Activated CD4-positive, alpha-beta memory T cell treated with anti-CD3 and anti-CD28 coated beads for 36 hours (primary cell): ENCODE measurements at regions of chr20 and their contacts with region 1.

Region 1: DNA sequence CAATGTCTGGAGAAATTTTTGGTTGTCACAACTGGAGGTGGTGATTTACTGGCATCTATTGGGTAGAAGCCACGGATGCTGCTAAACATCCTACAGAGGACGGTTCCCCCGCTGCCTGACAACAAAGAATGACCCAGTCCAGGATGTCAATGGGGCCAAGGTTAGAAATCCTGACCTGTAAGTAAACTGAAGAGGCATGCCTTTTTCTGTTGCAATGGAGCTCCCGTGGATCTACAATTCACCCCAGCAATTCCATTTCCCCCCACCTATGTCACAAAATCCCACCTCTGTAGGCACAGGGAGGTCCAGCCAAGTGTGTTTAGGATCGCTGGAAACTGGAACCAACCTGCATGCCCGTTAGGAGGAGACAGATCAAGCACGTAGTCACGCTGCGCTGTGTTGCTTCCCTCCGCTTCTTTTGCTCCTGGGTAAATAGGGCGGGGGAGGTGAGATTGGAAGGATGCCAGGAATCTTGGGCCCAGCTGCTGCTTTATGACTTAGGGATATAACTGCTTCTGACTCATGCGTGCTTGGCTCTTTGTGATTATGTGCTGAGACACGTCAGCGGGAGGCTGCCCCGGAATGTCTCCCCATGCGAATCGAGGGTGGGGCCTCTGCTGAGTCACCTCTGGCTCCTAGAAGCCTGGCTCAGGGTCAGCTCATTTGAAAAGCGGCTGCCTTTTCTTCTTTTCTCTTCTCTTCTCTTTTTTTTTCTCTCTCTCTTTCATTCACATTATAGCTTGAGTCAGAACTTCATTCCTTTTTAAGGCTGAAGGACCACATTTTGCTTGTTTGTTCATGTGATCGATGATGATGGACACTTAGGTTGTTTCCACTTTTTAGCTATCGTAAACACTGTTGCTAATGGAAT is 12.4 kb upstream of the PEDS1 start:
- DNase-seq: peak; percentile 95
- H3K4me3 Mint-ChIP-seq: peak overlapping the region; percentile 61
- H3K27ac Mint-ChIP-seq: peak overlapping the region; percentile 84
- H3K4me1 Mint-ChIP-seq: peaks cover 11% of the 10 kb centered on the region
- H3K27me3 Mint-ChIP-seq: peaks cover 2% of the 10 kb centered on the region

Region 2: DNA sequence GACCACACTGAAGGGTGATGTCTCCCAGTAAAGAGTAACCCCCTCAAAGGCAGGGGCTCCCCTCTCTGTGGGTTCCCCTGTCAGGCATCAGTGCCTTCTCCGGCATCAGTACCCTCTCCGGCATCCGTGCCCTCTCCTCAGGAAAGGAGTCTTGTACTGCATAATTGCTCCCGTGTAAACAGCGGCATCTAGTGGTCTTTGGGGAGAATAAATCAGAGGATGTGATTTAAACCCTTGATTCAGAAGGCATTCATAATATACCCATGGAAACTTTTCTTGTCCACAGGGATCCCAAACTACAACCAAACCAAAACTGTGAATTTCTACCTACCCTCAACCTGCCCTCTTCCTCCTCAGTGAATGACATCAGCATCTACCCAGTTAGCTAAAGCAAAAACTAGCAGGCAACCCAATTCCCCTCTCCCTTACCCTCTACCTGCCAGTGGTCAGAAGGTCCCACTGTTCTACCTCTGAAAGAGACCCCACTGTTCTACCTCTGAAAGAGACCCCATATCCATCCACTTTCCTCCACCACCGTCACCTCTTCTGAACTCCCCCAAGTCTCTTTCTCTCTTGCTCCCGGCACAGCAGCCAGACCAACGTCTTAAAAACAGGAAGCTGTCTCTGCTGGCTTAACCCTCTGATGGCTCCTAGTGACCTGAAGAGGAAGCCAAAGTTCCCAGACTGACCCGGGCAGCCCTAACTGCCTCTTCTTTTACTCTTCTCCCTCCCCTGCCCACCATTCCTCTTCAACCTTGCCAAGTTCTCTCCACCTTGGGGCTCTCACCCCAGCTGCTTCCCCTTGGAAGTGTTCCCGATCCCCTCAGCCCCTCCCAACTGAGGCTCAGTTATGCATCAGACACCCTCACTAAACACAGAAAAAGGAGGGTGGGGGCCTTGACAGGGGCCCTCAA is 80.2 kb before region 1 on chr20:
- CTCF ChIA-PET with region 1: interaction called, 26 read pairs
- POLR2A ChIA-PET with region 1: no interaction called
- intact Hi-C with region 1: no loop called
- DNase-seq: peak; percentile 36
- H3K4me3 Mint-ChIP-seq: no peak overlapping the region
- H3K27ac Mint-ChIP-seq: peak overlapping the region; percentile 39
- H3K4me1 Mint-ChIP-seq: peaks cover 31% of the 10 kb centered on the region
- H3K27me3 Mint-ChIP-seq: no peaks in the 10 kb centered on the region

Region 3: GRCh38 chr20:50120897-50121693 is 44.8 kb before region 1 on chr20:
- CTCF ChIA-PET with region 1: interaction called, 216 read pairs
- POLR2A ChIA-PET with region 1: interaction called, 6 read pairs
- intact Hi-C with region 1: loop called (anchors 1 kb)
- DNase-seq: peak; percentile 76
- H3K4me3 Mint-ChIP-seq: no peak overlapping the region
- H3K27ac Mint-ChIP-seq: no peak overlapping the region
- H3K4me1 Mint-ChIP-seq: peaks cover 8% of the 10 kb centered on the region
- H3K27me3 Mint-ChIP-seq: no peaks in the 10 kb centered on the region

Region 4: DNA sequence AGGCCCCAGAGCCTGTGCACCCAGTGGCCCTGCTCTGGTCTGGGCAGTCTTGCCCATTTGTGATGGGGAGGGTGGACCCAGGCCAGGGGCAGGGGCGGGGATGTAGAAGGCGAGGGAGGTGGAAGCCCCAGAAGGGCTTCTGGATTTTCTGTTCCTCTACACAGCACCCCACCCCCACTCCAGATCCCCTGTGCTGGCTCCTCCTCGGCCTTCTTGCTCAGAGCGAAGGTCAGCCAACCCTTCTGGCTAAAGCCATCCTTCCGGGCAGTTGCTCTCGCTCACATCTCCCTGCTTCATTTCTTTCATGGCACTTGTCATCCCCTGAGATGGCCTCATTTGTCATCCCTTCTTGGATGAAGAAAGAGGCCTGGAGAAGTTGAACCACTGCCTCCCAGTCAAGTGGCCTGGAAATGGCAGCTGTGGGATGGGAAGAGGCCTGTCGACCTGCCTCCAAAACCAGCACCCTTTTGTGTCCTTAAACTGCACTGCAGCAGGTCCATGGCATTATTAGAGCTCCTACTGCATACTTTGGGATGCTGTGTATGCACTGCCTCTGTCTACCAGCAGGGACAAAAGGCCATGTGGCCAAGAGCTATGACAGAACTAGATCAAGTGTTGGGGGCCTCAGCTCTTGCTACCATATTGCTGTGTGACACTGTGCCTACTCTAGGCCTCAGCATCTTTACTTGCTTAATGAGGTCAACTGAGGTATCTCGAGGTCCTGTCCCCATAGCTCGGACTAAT is 32.3 kb before region 1 on chr20:
- CTCF ChIA-PET with region 1: interaction called, 10 read pairs
- POLR2A ChIA-PET with region 1: no interaction called
- intact Hi-C with region 1: no loop called
- DNase-seq: no peak
- H3K4me3 Mint-ChIP-seq: no peak overlapping the region
- H3K27ac Mint-ChIP-seq: no peak overlapping the region
- H3K4me1 Mint-ChIP-seq: peaks cover 13% of the 10 kb centered on the region
- H3K27me3 Mint-ChIP-seq: no peaks in the 10 kb centered on the region

Region 5: GRCh38 chr20:50146732-50147662 is 18.9 kb before region 1 on chr20:
- CTCF ChIA-PET with region 1: interaction called, 44 read pairs
- POLR2A ChIA-PET with region 1: interaction called, 3 read pairs
- intact Hi-C with region 1: loop called (anchors 1 kb)
- DNase-seq: peak; percentile 89
- H3K4me3 Mint-ChIP-seq: peak overlapping the region; percentile 73
- H3K27ac Mint-ChIP-seq: peak overlapping the region; percentile 99
- H3K4me1 Mint-ChIP-seq: peaks cover 67% of the 10 kb centered on the region
- H3K27me3 Mint-ChIP-seq: no peaks in the 10 kb centered on the region

Region 6: GRCh38 chr20:50153485-50154377 is 12.2 kb before region 1 on chr20 and contains the start of gene PEDS1:
- CTCF ChIA-PET with region 1: interaction called, 44 read pairs
- POLR2A ChIA-PET with region 1: interaction called, 11 read pairs
- intact Hi-C with region 1: loop called (anchors 1 kb)
- DNase-seq: peak; percentile 90
- H3K4me3 Mint-ChIP-seq: peak within 1 kb of the TSS; percentile 81
- H3K27ac Mint-ChIP-seq: peak within 1 kb of the TSS; percentile 70
- H3K4me1 Mint-ChIP-seq: peaks cover 43% of the 10 kb centered on the region
- H3K27me3 Mint-ChIP-seq: no peaks in the 10 kb centered on the region
- total RNA-seq, gene PEDS1: 15.0 to 16.9 TPM

Region 7: DNA sequence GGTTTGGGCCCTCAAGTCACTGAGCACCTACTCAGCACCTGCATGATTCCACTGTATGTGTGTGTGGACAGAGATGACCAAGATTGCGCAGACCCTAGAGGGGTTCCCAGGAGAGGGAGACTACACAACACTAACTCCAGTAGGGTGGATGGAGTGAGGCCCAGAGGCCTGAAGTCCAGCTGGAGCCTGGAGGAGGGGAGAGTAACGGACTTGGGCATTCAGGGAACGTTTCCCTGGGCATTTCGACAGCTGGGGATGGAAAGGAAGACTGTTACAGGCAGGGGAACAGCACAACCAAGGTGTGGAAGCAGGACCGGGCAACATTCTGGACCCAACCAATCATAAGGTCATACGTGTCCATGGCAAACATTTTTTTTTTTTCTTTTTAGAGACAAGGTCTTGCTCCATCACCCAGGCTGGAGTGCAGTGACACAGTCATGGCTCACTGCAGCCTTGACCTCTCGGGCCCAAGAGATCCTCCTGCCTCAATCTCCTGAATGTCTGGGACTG is 13.6 kb after region 1 on chr20:
- CTCF ChIA-PET with region 1: interaction called, 37 read pairs
- POLR2A ChIA-PET with region 1: no interaction called
- intact Hi-C with region 1: no loop called
- DNase-seq: no peak
- H3K4me3 Mint-ChIP-seq: no peak overlapping the region
- H3K27ac Mint-ChIP-seq: no peak overlapping the region
- H3K4me1 Mint-ChIP-seq: no peaks in the 10 kb centered on the region
- H3K27me3 Mint-ChIP-seq: peaks cover 3% of the 10 kb centered on the region